ENCODE measurements at regions of chr1 and their contacts with region 1.

Region 1: DNA sequence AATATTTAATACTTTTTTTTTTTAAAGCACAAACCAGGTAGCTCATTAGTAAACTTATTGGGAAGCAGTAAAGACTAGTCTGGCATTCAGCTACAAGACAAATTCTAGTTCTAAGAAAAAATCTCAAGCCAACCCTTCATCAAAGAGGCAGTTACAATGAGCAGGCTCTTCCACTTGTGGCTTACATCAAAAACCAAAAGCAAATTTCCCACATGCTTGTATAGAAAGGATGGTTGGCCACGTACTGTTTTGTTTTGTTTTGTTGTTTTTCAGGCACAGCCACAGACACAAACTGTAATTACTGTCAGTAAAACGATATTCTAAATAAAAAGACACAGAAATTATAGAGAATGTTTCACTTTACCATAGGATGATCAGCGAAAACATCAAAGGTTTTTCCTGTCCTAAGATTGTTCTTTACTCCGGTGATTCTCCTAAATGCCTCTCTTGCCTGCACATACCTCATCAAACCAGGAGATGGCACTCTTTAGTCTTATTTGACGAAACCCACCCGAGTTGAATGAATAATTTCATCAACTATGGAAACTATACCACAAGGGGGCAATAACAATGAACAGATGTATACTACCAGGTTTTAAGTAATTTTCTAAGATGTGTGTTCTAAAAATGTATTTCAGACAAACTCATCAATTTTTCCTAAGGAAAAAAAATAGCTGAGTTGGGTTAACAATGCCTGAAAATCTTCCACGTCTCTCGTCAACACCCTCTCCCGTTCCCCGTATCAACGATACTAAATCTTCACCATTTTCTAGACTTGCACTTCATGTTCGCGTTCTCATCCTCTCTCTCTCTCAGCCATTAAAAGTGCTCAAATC is 26.9 kb downstream of the RPL5 start:
- DNase-seq: peak in 1 of 10 donors; percentile 52

Region 2: DNA sequence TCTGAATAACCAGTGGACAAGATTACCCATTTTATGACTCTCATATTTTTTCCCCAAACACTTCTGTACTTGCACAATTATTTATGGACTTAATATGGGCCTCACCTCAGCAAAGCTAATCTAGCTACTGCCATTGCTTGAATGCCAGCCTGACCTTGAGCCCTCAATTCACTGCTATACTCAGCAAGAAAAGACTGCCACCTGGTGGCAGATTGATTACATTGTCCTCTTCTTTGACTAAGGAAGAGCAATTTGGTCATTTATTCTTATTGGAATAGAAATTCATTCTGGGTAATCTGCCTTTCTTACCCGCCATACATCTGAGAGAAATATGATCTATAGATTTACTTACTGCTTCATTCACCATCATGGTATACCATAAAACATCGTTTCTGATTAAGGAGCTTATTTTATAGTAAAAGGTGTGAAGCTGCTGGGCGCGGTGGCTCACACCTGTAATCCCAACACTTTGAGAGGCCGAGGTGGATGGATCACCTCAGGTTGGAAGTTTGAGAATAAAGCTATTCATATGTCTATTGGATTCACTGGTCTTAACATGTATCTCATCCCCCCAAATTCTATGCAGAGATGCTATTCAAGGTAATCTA is 135.4 kb after region 1 on chr1:
- intact Hi-C with region 1: loop called (anchors 1 kb)
- DNase-seq: peak in 5 of 10 donors; percentile 37 to 74 (median 56)